ENCODE measurements at regions of chr5 and their contacts with region 1.

Region 1: GRCh38 chr5:142611154-142611553 is 74.7 kb downstream of the FGF1 start:
- DNase-seq: peak; percentile 59
- H3K4me3 ChIP-seq: no peak overlapping the region
- H3K27ac ChIP-seq: no peak overlapping the region
- H3K4me1 ChIP-seq: no peaks in the 10 kb centered on the region
- H3K27me3 ChIP-seq: no peaks in the 10 kb centered on the region
- CTCF ChIP-seq: peak in 3 of 4 experiments; percentile 42 to 81 (median 81)
- POLR2A ChIP-seq: no peak

Region 2: GRCh38 chr5:142655339-142656267 is 44.4 kb after region 1 on chr5:
- intact Hi-C with region 1: loop called (anchors 5 kb)
- DNase-seq: peak; percentile 69
- H3K4me3 ChIP-seq: no peak overlapping the region
- H3K27ac ChIP-seq: no peak overlapping the region
- H3K4me1 ChIP-seq: no peaks in the 10 kb centered on the region
- H3K27me3 ChIP-seq: no peaks in the 10 kb centered on the region
- CTCF ChIP-seq: peak; percentile 88 to 94 (median 90)
- POLR2A ChIP-seq: no peak

Region 3: DNA sequence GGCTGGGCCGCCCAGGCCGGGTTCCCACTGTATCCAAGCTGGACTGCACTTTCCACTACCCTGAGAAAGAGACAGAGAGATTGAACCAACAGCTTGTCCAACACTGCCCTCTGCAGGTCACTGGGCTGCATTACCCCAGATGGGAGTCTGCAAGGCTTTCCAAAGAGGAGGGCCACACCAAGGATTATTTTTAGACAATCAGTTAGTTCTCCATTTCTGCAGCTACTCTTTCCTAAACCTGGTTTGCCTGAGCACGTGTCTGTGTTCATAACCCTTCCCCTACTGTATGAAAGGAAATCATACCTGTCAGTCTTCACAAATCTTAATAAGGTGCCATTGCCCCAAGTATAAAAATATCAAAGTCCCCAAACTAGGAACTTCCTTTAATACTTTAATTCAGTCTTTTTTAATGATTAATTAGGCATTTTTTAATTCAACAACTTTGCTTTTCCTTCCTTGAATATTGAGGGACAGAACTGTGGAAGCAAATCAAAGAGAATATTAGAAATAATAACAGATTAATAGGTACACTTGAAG is 88.1 kb after region 1 on chr5:
- intact Hi-C with region 1: loop called (anchors 2 kb)
- DNase-seq: peak; percentile 81
- H3K4me3 ChIP-seq: no peak overlapping the region
- H3K27ac ChIP-seq: no peak overlapping the region
- H3K4me1 ChIP-seq: no peaks in the 10 kb centered on the region
- H3K27me3 ChIP-seq: no peaks in the 10 kb centered on the region
- CTCF ChIP-seq: peak; percentile 87 to 96 (median 94)
- POLR2A ChIP-seq: no peak

Region 4: GRCh38 chr5:142888469-142889085 is 277.4 kb after region 1 on chr5:
- intact Hi-C with region 1: loop called (anchors 10 kb)
- DNase-seq: no peak
- H3K4me3 ChIP-seq: no peak overlapping the region
- H3K27ac ChIP-seq: no peak overlapping the region
- H3K4me1 ChIP-seq: no peaks in the 10 kb centered on the region
- H3K27me3 ChIP-seq: no peaks in the 10 kb centered on the region
- CTCF ChIP-seq: peak; percentile 32 to 80 (median 78)
- POLR2A ChIP-seq: no peak